Naive thymus-derived CD4-positive, alpha-beta T cell (primary cell): ENCODE measurements at regions of chr5 and their contacts with region 1.

Region 1: DNA sequence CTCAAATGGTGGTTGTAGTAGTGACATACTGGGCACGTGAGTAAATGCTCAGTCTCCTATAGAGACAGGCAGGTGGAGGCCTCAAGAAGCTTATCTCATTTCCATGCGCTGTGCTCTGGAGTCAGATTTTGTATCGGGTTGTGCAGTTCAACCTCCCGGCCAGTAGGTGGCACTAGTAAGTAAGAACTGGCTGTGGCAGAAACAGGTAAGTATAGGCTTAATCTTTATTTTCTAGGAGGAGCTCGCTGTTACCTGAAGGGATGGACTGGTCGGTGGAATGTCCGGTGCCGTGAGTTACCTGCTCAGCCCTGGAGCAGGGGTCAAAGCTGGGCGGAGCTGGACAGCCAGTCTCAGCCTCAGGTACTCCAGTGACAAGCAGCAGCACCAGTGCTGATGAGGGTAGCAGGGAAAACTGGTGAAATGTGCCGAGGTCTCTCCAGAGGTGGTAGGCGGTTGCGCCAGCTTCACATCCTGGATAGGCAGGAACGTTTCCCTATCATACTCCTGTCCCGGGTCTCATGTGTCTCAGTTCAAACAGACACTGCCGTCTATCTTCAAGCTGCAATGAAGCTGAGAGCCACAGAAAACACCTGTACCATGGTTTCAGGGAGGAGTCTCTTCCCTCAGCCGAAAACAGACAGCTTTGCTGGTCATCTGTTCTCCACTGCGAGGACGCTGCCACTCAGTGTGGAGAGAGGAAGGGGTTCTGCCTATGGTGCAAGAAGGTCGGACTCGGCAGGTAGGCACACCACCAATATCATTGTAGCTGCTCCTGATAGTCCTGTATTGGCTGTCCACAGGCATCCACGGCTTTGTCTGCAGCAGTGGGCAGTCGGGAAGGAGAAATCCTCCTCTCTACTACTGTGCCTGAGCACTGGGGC is 880.3 kb upstream of the SEMA6A start:
- DNase-seq: peak in 8 of 9 donors; percentile 5 to 57 (median 42)
- ATAC-seq: peak; percentile 82
- H3K4me3 ChIP-seq: peak overlapping the region; percentile 47
- H3K4me3 Mint-ChIP-seq: peak overlapping the region; percentile 47 to 83 (median 75)
- H3K27ac ChIP-seq: no peak overlapping the region
- H3K27ac Mint-ChIP-seq: no peak overlapping the region
- H3K4me1 ChIP-seq: no peaks in the 10 kb centered on the region
- H3K4me1 Mint-ChIP-seq: peaks cover 0 to 8% (median 4%) of the 10 kb centered on the region in 7 donors
- H3K27me3 ChIP-seq: no peaks in the 10 kb centered on the region
- H3K27me3 Mint-ChIP-seq: peaks cover 0 to 12% (median 0%) of the 10 kb centered on the region in 5 donors

Region 2: GRCh38 chr5:117488976-117489500 is 34.1 kb after region 1 on chr5:
- CTCF ChIA-PET with region 1: no interaction called
- POLR2A ChIA-PET with region 1: no interaction called
- intact Hi-C with region 1: no loop called
- DNase-seq: no peak
- ATAC-seq: no peak
- H3K4me3 ChIP-seq: no peak overlapping the region
- H3K4me3 Mint-ChIP-seq: no peak overlapping the region
- H3K27ac ChIP-seq: no peak overlapping the region
- H3K27ac Mint-ChIP-seq: peak overlapping the region in 1 of 9 donors; percentile 73
- H3K4me1 ChIP-seq: no peaks in the 10 kb centered on the region
- H3K4me1 Mint-ChIP-seq: peaks cover 0 to 1% (median 0%) of the 10 kb centered on the region in 7 donors
- H3K27me3 ChIP-seq: no peaks in the 10 kb centered on the region
- H3K27me3 Mint-ChIP-seq: no peaks in the 10 kb centered on the region

Region 3: GRCh38 chr5:118611332-118611945 is 1156.5 kb after region 1 on chr5:
- CTCF ChIA-PET with region 1: no interaction called
- POLR2A ChIA-PET with region 1: no interaction called
- intact Hi-C with region 1: loop called in 1 of 2 experiments (anchors 10 kb)
- DNase-seq: no peak
- ATAC-seq: no peak
- H3K4me3 ChIP-seq: no peak overlapping the region
- H3K4me3 Mint-ChIP-seq: no peak overlapping the region
- H3K27ac ChIP-seq: no peak overlapping the region
- H3K27ac Mint-ChIP-seq: no peak overlapping the region
- H3K4me1 ChIP-seq: no peaks in the 10 kb centered on the region
- H3K4me1 Mint-ChIP-seq: peaks cover 0 to 1% (median 0%) of the 10 kb centered on the region in 7 donors
- H3K27me3 ChIP-seq: no peaks in the 10 kb centered on the region
- H3K27me3 Mint-ChIP-seq: peaks cover 0 to 4% (median 0%) of the 10 kb centered on the region in 5 donors

Region 4: GRCh38 chr5:118791926-118792734 is 1337.2 kb after region 1 on chr5:
- CTCF ChIA-PET with region 1: no interaction called
- POLR2A ChIA-PET with region 1: no interaction called
- intact Hi-C with region 1: loop called in 1 of 2 experiments (anchors 2 kb)
- DNase-seq: peak in 5 of 9 donors; percentile 6 to 26 (median 11)
- ATAC-seq: peak; percentile 60
- H3K4me3 ChIP-seq: no peak overlapping the region
- H3K4me3 Mint-ChIP-seq: no peak overlapping the region
- H3K27ac ChIP-seq: no peak overlapping the region
- H3K27ac Mint-ChIP-seq: no peak overlapping the region
- H3K4me1 ChIP-seq: no peaks in the 10 kb centered on the region
- H3K4me1 Mint-ChIP-seq: no peaks in the 10 kb centered on the region
- H3K27me3 ChIP-seq: no peaks in the 10 kb centered on the region
- H3K27me3 Mint-ChIP-seq: no peaks in the 10 kb centered on the region